HepG2 (cell line): ENCODE measurements at regions of chr18 and their contacts with region 1.

Region 1: GRCh38 chr18:7626922-7627440 is 59.9 kb downstream of the PTPRM start:
- DNase-seq: peak; percentile 93
- ATAC-seq: peak; percentile 89
- H3K4me3 ChIP-seq: peak overlapping the region in 2 of 3 experiments; percentile 25 to 52; a peak in 4 of 6 replicates
- H3K27ac ChIP-seq: peak overlapping the region; percentile 85
- H3K4me1 ChIP-seq: peaks cover 59% of the 10 kb centered on the region
- H3K27me3 ChIP-seq: no peaks in the 10 kb centered on the region
- CTCF ChIP-seq: peak; percentile 64
- EP300 ChIP-seq: no peak
- POLR2A ChIP-seq: no peak
- RAD21 ChIP-seq: peak; percentile 39; the same call in 1 of the 2 replicates

Region 2: DNA sequence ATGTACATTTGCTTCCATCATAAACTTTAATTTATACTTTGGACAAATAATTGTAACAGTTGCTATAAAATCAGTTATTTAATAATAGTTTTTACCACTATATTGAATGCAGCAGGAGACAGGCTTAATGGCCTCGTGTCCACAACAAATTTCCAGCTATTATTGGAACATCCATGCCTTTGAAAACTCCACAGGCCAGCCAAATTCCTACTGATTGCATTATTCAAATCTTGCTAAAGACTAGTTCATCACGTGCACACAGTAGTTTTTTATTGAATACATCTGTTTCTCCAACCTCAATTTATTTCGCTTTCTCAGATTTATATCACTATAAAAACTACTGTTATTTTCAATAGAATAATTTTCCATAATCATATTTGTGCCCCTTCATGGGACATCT is 78.3 kb before region 1 on chr18:
- CTCF ChIA-PET with region 1: no interaction called
- POLR2A ChIA-PET with region 1: no interaction called
- in situ Hi-C with region 1: no loop called
- intact Hi-C with region 1: no loop called
- DNase-seq: no peak
- ATAC-seq: no peak
- H3K4me3 ChIP-seq: no peak overlapping the region
- H3K27ac ChIP-seq: no peak overlapping the region
- H3K4me1 ChIP-seq: no peaks in the 10 kb centered on the region
- H3K27me3 ChIP-seq: no peaks in the 10 kb centered on the region
- CTCF ChIP-seq: no peak
- EP300 ChIP-seq: no peak
- POLR2A ChIP-seq: no peak
- RAD21 ChIP-seq: no peak

Region 3: GRCh38 chr18:7637269-7637668 is 10.3 kb after region 1 on chr18:
- CTCF ChIA-PET with region 1: no interaction called
- POLR2A ChIA-PET with region 1: interaction called, 9 read pairs
- in situ Hi-C with region 1: no loop called
- intact Hi-C with region 1: loop called (anchors 1 kb)
- DNase-seq: peak; percentile 80
- ATAC-seq: peak; percentile 78
- H3K4me3 ChIP-seq: no peak overlapping the region
- H3K27ac ChIP-seq: no peak overlapping the region
- H3K4me1 ChIP-seq: peaks cover 42% of the 10 kb centered on the region
- H3K27me3 ChIP-seq: no peaks in the 10 kb centered on the region
- CTCF ChIP-seq: no peak
- EP300 ChIP-seq: peak in 1 of 2 experiments; percentile 45; a peak in 1 of 4 replicates
- POLR2A ChIP-seq: no peak
- RAD21 ChIP-seq: no peak

Region 4: GRCh38 chr18:7755753-7756475 is 128.9 kb after region 1 on chr18:
- CTCF ChIA-PET with region 1: no interaction called
- POLR2A ChIA-PET with region 1: interaction called, 3 read pairs
- in situ Hi-C with region 1: no loop called
- intact Hi-C with region 1: loop called (anchors 2 kb)
- DNase-seq: peak; percentile 63
- ATAC-seq: peak; percentile 53
- H3K4me3 ChIP-seq: peak overlapping the region in 2 of 3 experiments; percentile 52 to 69; a peak in 3 of 6 replicates
- H3K27ac ChIP-seq: peak overlapping the region; percentile 84
- H3K4me1 ChIP-seq: peaks cover 90% of the 10 kb centered on the region
- H3K27me3 ChIP-seq: no peaks in the 10 kb centered on the region
- CTCF ChIP-seq: peak; percentile 68
- EP300 ChIP-seq: 0 out of 4 replicates have a peak, but pooled peaks of 1 of the 2 experiments have one; percentile 38
- POLR2A ChIP-seq: no peak
- RAD21 ChIP-seq: peak; percentile 53; the same call in 1 of the 2 replicates